ENCODE measurements at regions of chr11 and their contacts with region 1.

Region 1: DNA sequence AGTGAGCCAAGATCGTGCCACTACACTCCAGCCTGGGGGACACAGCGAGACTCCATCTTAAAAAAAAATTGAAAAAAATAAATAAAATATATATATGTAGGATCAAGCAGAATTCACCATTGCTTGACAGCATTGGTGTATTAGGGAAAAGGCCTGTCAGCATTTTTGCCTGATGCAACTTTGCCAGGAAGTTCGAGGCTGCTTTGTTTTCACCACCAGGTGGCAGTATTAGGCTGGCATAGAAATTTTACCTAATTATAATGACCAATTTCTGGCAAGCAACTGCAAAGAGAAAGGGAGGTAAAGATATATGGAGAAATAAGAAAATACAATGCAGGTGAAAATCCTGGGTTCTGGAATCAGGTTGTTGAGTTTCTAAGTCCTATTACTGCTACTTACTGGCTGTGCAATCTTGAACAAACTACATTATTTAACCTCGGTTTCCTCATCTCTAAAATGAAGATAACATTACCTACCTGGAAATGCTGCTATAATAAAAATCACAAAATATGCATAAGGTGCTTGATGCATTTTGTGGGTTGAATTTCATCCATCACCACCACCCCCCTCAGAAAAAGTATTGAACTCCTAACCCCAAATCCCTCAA is 24.7 kb downstream of the LAYN start:
- DNase-seq: peak; percentile 64 to 81 (median 69)
- H3K4me3 ChIP-seq: no peak overlapping the region
- H3K27ac ChIP-seq: no peak overlapping the region
- H3K4me1 ChIP-seq: peaks cover 0 to 11% (median 4%) of the 10 kb centered on the region in 4 experiments
- H3K27me3 ChIP-seq: no peaks in the 10 kb centered on the region

Region 2: DNA sequence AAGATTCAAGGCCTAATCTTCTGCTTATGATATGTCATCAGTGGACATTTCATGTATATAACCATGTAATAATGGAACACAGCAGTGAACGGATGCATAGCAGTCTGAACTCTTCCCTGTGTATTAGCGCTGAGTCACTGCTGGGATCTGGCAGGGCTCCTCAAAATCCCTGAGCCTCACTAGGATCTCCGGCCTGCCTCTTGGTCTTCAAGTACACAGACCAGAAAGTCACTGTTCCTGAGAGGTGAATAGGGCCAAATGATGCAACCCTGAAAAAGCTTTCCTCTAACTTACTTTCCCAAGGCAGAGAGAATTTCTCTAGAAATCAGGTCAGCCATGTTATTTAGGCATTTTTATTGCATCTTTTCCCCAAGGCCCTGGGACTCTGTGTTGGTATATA is 221.2 kb before region 1 on chr11:
- CTCF ChIA-PET with region 1: no interaction called
- POLR2A ChIA-PET with region 1: no interaction called
- DNase-seq: no peak
- H3K4me3 ChIP-seq: no peak overlapping the region
- H3K27ac ChIP-seq: no peak overlapping the region
- H3K4me1 ChIP-seq: no peaks in the 10 kb centered on the region
- H3K27me3 ChIP-seq: no peaks in the 10 kb centered on the region

Region 3: DNA sequence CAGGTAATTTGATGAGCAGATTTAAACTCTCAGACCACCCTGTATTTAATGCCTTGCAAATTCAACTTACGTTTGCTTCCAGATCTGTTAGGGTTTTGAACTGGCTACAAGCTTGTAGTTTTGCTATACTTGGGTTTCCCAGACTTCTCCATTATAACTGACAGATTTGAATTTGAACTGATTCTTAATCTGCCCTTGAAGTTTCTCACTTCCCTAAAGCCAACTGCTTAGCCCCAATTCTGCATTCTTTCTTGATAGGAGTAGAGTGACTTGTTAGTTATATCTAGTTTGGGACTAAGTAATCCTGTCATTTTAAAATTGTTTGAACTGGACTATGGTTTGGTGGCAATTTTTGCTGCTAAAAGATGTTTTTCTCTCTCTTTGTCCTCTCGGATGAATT is 15.0 kb before region 1 on chr11:
- CTCF ChIA-PET with region 1: interaction called, 10 read pairs
- POLR2A ChIA-PET with region 1: no interaction called
- DNase-seq: peak in 1 of 3 donors; percentile 4
- H3K4me3 ChIP-seq: no peak overlapping the region
- H3K27ac ChIP-seq: no peak overlapping the region
- H3K4me1 ChIP-seq: no peaks in the 10 kb centered on the region
- H3K27me3 ChIP-seq: peaks cover 0 to 7% (median 0%) of the 10 kb centered on the region in 5 experiments

Region 4: GRCh38 chr11:111586388-111586831 is 21.2 kb after region 1 on chr11:
- CTCF ChIA-PET with region 1: interaction called, 10 read pairs
- POLR2A ChIA-PET with region 1: no interaction called
- DNase-seq: peak; percentile 63 to 82 (median 74)
- H3K4me3 ChIP-seq: no peak overlapping the region
- H3K27ac ChIP-seq: no peak overlapping the region
- H3K4me1 ChIP-seq: peaks cover 17 to 35% (median 23%) of the 10 kb centered on the region in 4 experiments
- H3K27me3 ChIP-seq: no peaks in the 10 kb centered on the region

Region 5: GRCh38 chr11:111841370-111842053 is 276.3 kb after region 1 on chr11:
- CTCF ChIA-PET with region 1: interaction called, 10 read pairs
- POLR2A ChIA-PET with region 1: no interaction called
- DNase-seq: peak; percentile 83 to 91 (median 86)
- H3K4me3 ChIP-seq: no peak overlapping the region
- H3K27ac ChIP-seq: no peak overlapping the region
- H3K4me1 ChIP-seq: peaks cover 0 to 7% (median 0%) of the 10 kb centered on the region in 4 experiments
- H3K27me3 ChIP-seq: no peaks in the 10 kb centered on the region